Activated CD8-positive, alpha-beta T cell treated with anti-CD3 and anti-CD28 coated beads, Interleukin-2, amount 10 ng/mL, durations not matched to agents 7 days and 5 days (primary cell): ENCODE measurements at regions of chr3 and their contacts with region 1.

Region 1: DNA sequence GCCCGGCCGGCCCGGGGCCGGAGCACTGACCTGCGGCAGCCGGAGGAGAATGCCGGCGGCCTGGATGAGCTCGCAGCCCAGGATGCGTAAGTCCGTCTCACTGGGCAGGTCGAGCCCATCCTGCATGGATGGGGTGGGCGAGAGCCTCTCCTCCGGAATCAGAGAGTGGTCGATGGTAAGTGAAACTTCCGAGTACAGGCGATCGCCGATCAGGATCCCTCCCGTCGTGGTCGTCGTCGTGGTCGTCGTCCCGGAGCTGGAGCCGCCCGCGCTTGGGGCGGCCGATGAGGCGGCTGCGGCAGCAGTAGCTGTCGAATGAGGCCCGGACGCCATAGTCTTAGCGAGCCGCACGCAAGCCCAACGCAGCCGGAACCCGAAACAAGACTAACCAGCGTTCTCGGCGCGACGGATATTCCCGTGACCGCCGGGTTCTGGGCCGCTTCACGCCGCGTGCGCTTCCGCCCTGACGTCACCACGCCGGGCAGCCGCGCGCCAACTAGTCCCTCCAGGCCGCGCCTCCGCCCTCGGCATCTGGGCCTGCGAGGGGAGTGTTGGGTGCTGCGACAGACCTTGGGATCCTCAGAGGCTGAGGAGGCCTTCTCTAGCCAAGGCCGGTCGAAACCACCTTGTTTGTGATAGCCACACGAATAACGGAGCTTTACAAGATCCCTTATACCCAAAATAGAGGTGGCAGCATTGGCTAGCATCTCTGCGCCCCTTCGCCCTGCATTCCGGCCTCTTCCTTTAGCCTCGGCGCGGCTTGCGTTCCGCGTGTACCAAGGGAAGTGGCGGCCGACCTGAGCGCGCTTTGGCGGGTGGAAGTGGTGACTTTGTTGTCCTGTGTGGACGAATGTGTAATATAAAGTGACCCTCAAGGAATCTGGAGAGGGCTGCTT is at the start of gene CCNL1:
- DNase-seq: peak; percentile 96
- ATAC-seq: peak; percentile 80
- H3K4me3 Mint-ChIP-seq: peak within 1 kb of the TSS; percentile 88
- H3K27ac Mint-ChIP-seq: peak within 1 kb of the TSS; percentile 93
- H3K4me1 Mint-ChIP-seq: peaks cover 53% of the 10 kb centered on the region
- H3K27me3 Mint-ChIP-seq: no peaks in the 10 kb centered on the region
- total RNA-seq, gene CCNL1: 257 TPM

Region 2: GRCh38 chr3:156664831-156665178 is 495.2 kb before region 1 on chr3:
- CTCF ChIA-PET with region 1: no interaction called
- POLR2A ChIA-PET with region 1: interaction called, 10 read pairs
- DNase-seq: no peak
- ATAC-seq: peak; percentile 65
- H3K4me3 Mint-ChIP-seq: peak overlapping the region; percentile 58
- H3K27ac Mint-ChIP-seq: peak overlapping the region; percentile 91
- H3K4me1 Mint-ChIP-seq: peaks cover 74% of the 10 kb centered on the region
- H3K27me3 Mint-ChIP-seq: no peaks in the 10 kb centered on the region

Region 3: GRCh38 chr3:157088601-157089454 is 71.2 kb before region 1 on chr3:
- CTCF ChIA-PET with region 1: interaction called, 3 read pairs
- POLR2A ChIA-PET with region 1: interaction called, 34 read pairs
- DNase-seq: peak; percentile 95
- ATAC-seq: peak; percentile 96
- H3K4me3 Mint-ChIP-seq: peak overlapping the region; percentile 80
- H3K27ac Mint-ChIP-seq: peak overlapping the region; percentile 94
- H3K4me1 Mint-ChIP-seq: peaks cover 51% of the 10 kb centered on the region
- H3K27me3 Mint-ChIP-seq: no peaks in the 10 kb centered on the region

Region 4: GRCh38 chr3:157136647-157137387 is 23.2 kb before region 1 on chr3:
- CTCF ChIA-PET with region 1: interaction called, 16 read pairs
- POLR2A ChIA-PET with region 1: interaction called, 37 read pairs
- DNase-seq: no peak
- ATAC-seq: peak; percentile 3
- H3K4me3 Mint-ChIP-seq: no peak overlapping the region
- H3K27ac Mint-ChIP-seq: peak overlapping the region; percentile 64
- H3K4me1 Mint-ChIP-seq: peaks cover 59% of the 10 kb centered on the region
- H3K27me3 Mint-ChIP-seq: no peaks in the 10 kb centered on the region

Region 5: DNA sequence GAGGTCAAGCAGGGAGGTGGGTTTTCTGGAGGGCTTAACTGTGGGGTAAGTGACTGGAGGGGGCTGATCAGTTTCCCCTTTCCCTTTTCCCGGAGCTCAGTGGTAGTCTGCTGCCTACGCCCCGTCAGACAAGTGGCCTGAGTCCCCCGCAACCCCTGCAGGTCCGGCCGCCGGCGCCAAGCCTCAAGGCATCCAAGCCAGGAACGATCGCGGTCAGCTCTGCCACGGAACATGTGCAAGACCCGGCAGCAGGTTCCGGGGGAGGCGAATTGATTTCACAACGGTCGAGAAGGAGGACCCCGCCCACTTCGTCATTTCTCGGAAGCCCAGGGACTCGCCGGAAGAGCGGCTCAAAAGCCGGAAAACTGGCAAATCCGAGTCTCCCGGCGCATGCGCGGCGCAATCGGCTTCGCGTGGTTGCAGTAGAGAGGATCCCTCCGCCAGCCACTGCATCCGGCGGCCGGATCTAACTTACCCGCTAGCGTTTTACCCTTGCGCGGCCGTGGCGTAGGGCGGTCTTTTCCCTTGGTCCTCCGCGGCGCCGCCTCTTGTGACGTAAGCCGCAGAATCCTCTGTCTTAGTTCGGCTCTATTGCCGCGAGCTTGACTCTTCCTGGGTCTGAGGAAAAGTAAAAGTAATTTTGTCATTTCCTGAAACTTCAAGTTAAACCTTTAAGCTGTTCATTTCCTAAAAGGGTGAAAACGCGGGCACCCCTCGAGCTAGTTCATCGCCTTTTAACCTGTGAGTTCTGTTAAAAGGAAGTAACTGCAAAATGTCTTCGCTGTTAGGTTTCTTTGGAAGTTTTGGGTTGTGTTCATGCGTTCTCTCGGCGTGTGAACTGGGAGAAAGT is 14.9 kb after region 1 on chr3:
- CTCF ChIA-PET with region 1: interaction called, 77 read pairs
- POLR2A ChIA-PET with region 1: interaction called, 650 read pairs
- DNase-seq: peak; percentile 98
- ATAC-seq: peak; percentile 93
- H3K4me3 Mint-ChIP-seq: peak overlapping the region; percentile 96
- H3K27ac Mint-ChIP-seq: peak overlapping the region; percentile 98
- H3K4me1 Mint-ChIP-seq: peaks cover 30% of the 10 kb centered on the region
- H3K27me3 Mint-ChIP-seq: no peaks in the 10 kb centered on the region

Region 6: DNA sequence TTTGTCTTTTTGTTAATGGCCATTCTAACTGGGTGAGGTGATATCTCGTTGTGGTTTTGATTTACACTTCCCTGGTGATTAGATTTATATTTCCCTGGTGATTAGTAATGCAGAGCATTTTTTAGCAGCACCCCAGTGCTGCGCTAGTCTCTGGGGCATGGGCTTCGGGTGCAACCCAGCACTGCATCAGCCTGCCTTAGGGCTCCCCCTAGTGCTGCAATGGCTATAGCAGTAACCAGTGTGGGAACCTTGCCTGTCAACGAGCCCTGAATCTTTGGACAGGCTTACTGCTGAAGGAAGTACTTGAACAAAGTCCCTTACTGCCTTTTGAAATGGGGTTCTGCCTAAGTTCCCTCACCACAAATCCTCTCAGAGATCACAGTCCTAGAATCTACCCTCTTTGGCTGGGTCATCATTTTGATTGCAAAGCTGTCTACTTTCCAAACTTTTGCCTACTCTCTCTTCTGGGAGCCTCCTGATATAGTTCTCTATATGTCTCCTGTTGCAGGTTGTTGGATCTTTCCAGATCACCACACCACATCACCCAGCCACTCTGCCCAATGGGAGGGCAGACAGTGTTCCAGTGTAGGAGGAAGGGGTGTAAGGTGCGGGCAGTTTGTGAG is 79.2 kb after region 1 on chr3:
- CTCF ChIA-PET with region 1: interaction called, 9 read pairs
- POLR2A ChIA-PET with region 1: interaction called, 19 read pairs
- DNase-seq: peak; percentile 86
- ATAC-seq: peak; percentile 100
- H3K4me3 Mint-ChIP-seq: no peak overlapping the region
- H3K27ac Mint-ChIP-seq: no peak overlapping the region
- H3K4me1 Mint-ChIP-seq: peaks cover 4% of the 10 kb centered on the region
- H3K27me3 Mint-ChIP-seq: no peaks in the 10 kb centered on the region

Region 7: DNA sequence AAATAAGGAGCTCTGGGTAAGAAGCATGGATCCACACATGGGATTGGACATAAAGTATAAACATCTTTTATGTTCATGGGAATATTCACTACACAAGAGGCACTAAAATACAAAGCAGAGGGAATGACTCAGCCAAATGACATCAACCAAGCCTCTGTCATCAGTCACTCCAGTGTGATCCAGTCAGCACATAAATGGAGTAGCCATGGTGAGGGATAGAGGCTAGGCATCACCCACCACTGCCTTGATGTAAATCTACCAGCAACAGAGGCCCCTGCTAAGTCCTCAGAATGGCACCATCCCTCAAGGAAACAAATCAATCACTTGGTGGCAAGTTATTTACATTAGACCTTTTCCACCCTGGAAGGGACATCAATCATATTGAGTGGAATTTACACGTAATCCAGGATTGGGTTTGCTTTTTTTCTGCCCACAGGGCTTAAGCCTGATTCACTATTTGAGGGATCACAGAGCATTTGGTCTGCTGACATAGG is 316.0 kb after region 1 on chr3:
- CTCF ChIA-PET with region 1: no interaction called
- POLR2A ChIA-PET with region 1: no interaction called
- DNase-seq: no peak
- ATAC-seq: no peak
- H3K4me3 Mint-ChIP-seq: no peak overlapping the region
- H3K27ac Mint-ChIP-seq: no peak overlapping the region
- H3K4me1 Mint-ChIP-seq: no peaks in the 10 kb centered on the region
- H3K27me3 Mint-ChIP-seq: peaks cover 5% of the 10 kb centered on the region